Motor neuron (in vitro differentiated cells): ENCODE measurements at regions of chr18 and their contacts with region 1.

Region 1: DNA sequence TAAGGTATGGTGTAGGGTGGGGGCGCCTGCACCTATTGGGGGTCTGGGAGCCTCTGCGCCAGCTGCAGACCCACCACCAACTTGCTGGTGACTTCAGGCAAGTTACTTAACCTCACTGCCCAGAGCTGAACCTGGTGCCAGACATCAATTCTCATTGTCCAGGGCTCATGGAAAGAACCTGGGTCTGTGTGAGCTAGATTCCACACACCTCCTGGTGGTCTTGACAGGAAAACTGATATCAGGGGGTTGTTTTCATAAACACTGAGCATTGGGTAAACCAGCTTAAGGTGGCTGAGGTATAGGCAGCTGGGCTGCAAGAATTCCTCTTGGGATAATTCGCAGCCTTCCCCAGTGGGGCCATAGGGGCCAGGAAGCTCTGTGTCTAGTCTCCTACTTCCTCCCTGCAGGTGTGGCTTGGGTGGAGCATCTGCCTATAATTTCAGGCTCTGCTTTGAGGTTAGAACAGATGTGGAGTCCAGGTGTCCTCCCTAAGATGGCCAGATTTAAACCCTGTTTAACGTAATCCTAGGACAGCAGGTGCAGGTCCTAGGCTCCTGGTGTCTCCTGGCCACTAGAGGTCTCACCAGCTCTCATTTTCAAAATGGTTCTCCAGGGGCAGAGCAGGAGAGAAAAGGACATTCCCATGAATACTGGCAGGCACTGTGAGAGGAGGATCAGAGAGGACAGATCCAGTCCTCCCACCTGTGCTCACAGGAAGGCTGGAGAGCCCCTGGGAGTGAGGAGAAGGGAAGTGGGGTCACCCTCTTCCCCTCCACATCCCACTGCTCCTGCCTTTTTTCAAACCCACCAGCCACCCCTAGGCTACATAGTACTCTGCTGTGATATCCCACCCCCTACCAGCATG is 100.4 kb upstream of the SMAD2 start:
- ATAC-seq: peak; percentile 63 to 97 (median 90)
- H3K4me3 ChIP-seq: no peak overlapping the region
- H3K27ac ChIP-seq: no peak overlapping the region
- H3K4me1 ChIP-seq: peaks cover 9 to 20% of the 10 kb centered on the region in 2 donors

Region 2: GRCh38 chr18:48222118-48222517 is 191.3 kb after region 1 on chr18:
- in situ Hi-C with region 1: loop called in 1 of 9 experiments (anchors 25 kb)
- ATAC-seq: peak; percentile 54 to 94 (median 88)
- H3K4me3 ChIP-seq: no peak overlapping the region
- H3K27ac ChIP-seq: no peak overlapping the region
- H3K4me1 ChIP-seq: peaks cover 5 to 14% of the 10 kb centered on the region in 2 donors

Region 3: GRCh38 chr18:48330403-48331022 is 299.7 kb after region 1 on chr18:
- in situ Hi-C with region 1: loop called in 1 of 9 experiments (anchors 10 kb)
- ATAC-seq: peak in 7 of 8 experiments; percentile 35 to 65 (median 53)
- H3K4me3 ChIP-seq: no peak overlapping the region
- H3K27ac ChIP-seq: no peak overlapping the region
- H3K4me1 ChIP-seq: peaks cover 17 to 25% of the 10 kb centered on the region in 2 donors

Region 4: GRCh38 chr18:49238433-49239042 is 1207.7 kb after region 1 on chr18:
- in situ Hi-C with region 1: no loop called
- ATAC-seq: peak in 3 of 8 experiments; percentile 15 to 36 (median 35)
- H3K4me3 ChIP-seq: no peak overlapping the region
- H3K27ac ChIP-seq: no peak overlapping the region
- H3K4me1 ChIP-seq: no peaks in the 10 kb centered on the region